Prostate gland (tissue), 2 donors: ENCODE measurements at regions of chr12 and their contacts with region 1.

Region 1: GRCh38 chr12:120580787-120581723 is at the start of gene POP5:
- DNase-seq: peak; percentile 96
- H3K4me3 ChIP-seq: peak within 1 kb of the TSS; percentile 70 to 76
- H3K27ac ChIP-seq: peak within 1 kb of the TSS; percentile 57 to 64
- H3K4me1 ChIP-seq: peaks cover 7% of the 10 kb centered on the region
- H3K27me3 ChIP-seq: no peaks in the 10 kb centered on the region
- CTCF ChIP-seq: peak in 1 of 4 experiments; percentile 23
- POLR2A ChIP-seq: peak; percentile 28
- total RNA-seq, gene POP5: 39.3 to 45.2 TPM

Region 2: GRCh38 chr12:120649442-120650232 is 68.6 kb after region 1 on chr12:
- intact Hi-C with region 1: loop called (anchors 5 kb)
- DNase-seq: no peak
- H3K4me3 ChIP-seq: peak overlapping the region in 1 of 2 donors; percentile 23
- H3K27ac ChIP-seq: peak overlapping the region in 1 of 2 donors; percentile 22
- H3K4me1 ChIP-seq: no peaks in the 10 kb centered on the region
- H3K27me3 ChIP-seq: no peaks in the 10 kb centered on the region
- CTCF ChIP-seq: no peak
- POLR2A ChIP-seq: no peak

Region 3: DNA sequence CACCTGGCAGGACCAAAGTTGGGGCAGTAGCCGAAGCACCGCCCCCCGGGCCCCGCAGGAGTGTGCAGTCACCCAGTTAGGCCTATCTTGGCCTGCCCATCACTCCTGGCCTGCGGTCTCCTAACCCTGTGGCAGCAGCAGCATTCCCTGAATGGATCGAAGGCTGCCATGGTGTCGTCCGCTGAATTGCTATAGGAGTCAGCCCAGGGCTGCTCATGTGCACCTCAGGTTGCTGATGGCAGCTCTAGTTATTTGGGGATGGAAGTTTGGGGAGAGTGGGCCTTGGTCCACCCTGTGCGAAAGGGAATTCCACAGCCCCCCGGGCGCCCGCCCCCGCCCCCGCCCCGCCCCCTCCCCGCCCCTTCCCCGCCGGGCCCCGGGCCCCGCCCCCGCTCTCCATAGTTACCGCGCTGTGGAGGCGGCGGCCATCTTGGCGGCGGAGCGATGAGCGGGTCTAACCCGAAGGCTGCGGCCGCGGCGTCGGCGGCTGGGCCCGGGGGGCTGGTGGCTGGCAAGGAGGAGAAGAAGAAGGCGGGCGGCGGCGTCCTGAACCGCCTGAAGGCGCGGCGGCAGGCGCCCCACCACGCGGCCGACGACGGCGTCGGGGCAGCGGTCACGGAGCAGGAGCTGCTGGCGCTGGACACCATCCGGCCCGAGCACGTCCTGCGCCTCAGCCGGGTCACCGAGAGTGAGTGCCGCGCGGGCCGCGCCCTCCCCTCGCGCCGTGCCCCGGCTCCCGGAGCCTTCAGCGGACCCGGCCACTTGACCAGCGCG is 129.2 kb after region 1 on chr12 and contains the start of gene UNC119B:
- intact Hi-C with region 1: loop called (anchors 2 kb)
- DNase-seq: peak; percentile 62
- H3K4me3 ChIP-seq: peak within 1 kb of the TSS; percentile 94 to 97
- H3K27ac ChIP-seq: peak within 1 kb of the TSS; percentile 92 to 94
- H3K4me1 ChIP-seq: no peaks in the 10 kb centered on the region
- H3K27me3 ChIP-seq: no peaks in the 10 kb centered on the region
- CTCF ChIP-seq: no peak
- POLR2A ChIP-seq: peak; percentile 41
- total RNA-seq, gene UNC119B: 26.0 to 41.9 TPM

Region 4: GRCh38 chr12:120971299-120972179 is 390.5 kb after region 1 on chr12:
- intact Hi-C with region 1: loop called (anchors 5 kb)
- DNase-seq: peak; percentile 28
- H3K4me3 ChIP-seq: no peak overlapping the region
- H3K27ac ChIP-seq: no peak overlapping the region
- H3K4me1 ChIP-seq: no peaks in the 10 kb centered on the region
- H3K27me3 ChIP-seq: no peaks in the 10 kb centered on the region
- CTCF ChIP-seq: peak; percentile 19 to 78 (median 62)
- POLR2A ChIP-seq: no peak

Region 5: GRCh38 chr12:121026274-121027045 is 445.4 kb after region 1 on chr12:
- intact Hi-C with region 1: no loop called
- DNase-seq: no peak
- H3K4me3 ChIP-seq: no peak overlapping the region
- H3K27ac ChIP-seq: no peak overlapping the region
- H3K4me1 ChIP-seq: no peaks in the 10 kb centered on the region
- H3K27me3 ChIP-seq: no peaks in the 10 kb centered on the region
- CTCF ChIP-seq: no peak
- POLR2A ChIP-seq: no peak

Region 6: GRCh38 chr12:121107691-121108090 is 526.6 kb after region 1 on chr12:
- intact Hi-C with region 1: loop called (anchors 5 kb)
- DNase-seq: no peak
- H3K4me3 ChIP-seq: no peak overlapping the region
- H3K27ac ChIP-seq: no peak overlapping the region
- H3K4me1 ChIP-seq: no peaks in the 10 kb centered on the region
- H3K27me3 ChIP-seq: no peaks in the 10 kb centered on the region
- CTCF ChIP-seq: no peak
- POLR2A ChIP-seq: no peak